CD4-positive, alpha-beta memory T cell (primary cell): ENCODE measurements at regions of chr9 and their contacts with region 1.

Region 1: GRCh38 chr9:35611230-35611797 is 6.3 kb downstream of the TESK1 start:
- DNase-seq: peak; percentile 45 to 63 (median 49)
- H3K4me3 ChIP-seq: no peak overlapping the region
- H3K4me3 Mint-ChIP-seq: peak overlapping the region in 1 of 8 donors; percentile 26
- H3K27ac ChIP-seq: no peak overlapping the region
- H3K27ac Mint-ChIP-seq: peak overlapping the region in 5 of 7 donors; percentile 4 to 83 (median 59)
- H3K4me1 ChIP-seq: peaks cover 19% of the 10 kb centered on the region
- H3K4me1 Mint-ChIP-seq: peaks cover 13 to 43% (median 20%) of the 10 kb centered on the region in 4 donors
- H3K27me3 ChIP-seq: no peaks in the 10 kb centered on the region
- H3K27me3 Mint-ChIP-seq: no peaks in the 10 kb centered on the region

Region 2: GRCh38 chr9:35636135-35636876 is 25.0 kb after region 1 on chr9:
- CTCF ChIA-PET with region 1: interaction called, 10 read pairs
- POLR2A ChIA-PET with region 1: interaction called, 3 read pairs
- intact Hi-C with region 1: no loop called
- DNase-seq: peak in 1 of 5 donors; percentile 33
- H3K4me3 ChIP-seq: no peak overlapping the region
- H3K4me3 Mint-ChIP-seq: peak overlapping the region in 3 of 8 donors; percentile 22 to 60 (median 43)
- H3K27ac ChIP-seq: no peak overlapping the region
- H3K27ac Mint-ChIP-seq: peak overlapping the region in 6 of 7 donors; percentile 6 to 71 (median 38)
- H3K4me1 ChIP-seq: peaks cover 32% of the 10 kb centered on the region
- H3K4me1 Mint-ChIP-seq: peaks cover 22 to 56% (median 41%) of the 10 kb centered on the region in 4 donors
- H3K27me3 ChIP-seq: no peaks in the 10 kb centered on the region
- H3K27me3 Mint-ChIP-seq: no peaks in the 10 kb centered on the region

Region 3: DNA sequence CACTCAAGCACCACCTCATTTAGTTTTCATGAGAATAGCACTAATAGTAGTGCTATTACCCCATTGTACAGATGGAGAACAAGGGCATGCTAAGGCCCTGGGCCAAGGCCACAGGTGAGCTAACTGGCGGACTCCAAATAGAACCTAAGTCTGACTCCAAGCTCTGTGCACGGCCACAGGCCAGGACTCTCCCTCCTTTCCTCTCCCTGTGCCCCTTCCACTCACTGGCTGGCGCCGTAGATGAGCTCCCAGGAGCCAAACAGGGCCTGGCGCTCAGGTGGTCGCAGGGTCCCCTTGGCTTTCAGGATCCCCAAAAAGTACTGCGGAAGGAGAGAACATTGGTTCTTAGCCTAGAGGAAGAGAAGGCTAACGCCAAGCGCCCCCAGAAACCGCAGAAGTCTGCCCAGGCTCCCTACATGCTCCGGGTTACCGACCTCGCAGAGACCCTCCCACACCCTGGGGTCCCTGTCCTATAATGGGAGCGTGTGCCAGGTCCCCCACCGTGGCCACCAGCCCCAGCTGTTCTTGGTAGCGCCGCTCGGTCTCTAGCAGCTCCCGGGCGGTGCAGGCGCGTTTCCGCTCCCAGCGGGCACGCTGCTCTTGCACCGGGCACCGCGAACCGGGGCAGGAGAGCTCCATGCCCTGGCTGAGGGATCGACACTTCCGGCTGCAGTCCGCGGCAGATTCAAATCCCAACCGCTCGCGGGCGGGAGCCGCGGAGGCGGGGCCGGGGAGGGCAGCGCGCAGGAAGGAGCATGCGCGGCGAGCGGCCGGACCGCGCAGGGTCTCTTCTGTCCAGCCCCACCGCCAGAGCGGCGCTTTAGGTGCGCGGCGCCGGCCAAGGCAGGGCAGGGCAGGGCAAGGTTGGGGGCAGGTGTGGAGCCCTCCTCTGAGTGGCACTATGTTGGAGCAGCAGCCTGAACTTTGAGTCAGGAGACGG is 53.5 kb after region 1 on chr9 and contains the start of gene ARHGEF39:
- CTCF ChIA-PET with region 1: interaction called, 145 read pairs
- POLR2A ChIA-PET with region 1: interaction called, 80 read pairs
- intact Hi-C with region 1: no loop called
- DNase-seq: peak; percentile 64 to 72 (median 67)
- H3K4me3 ChIP-seq: peak within 1 kb of the TSS; percentile 42 to 51
- H3K4me3 Mint-ChIP-seq: peak within 1 kb of the TSS; percentile 83 to 91 (median 88)
- H3K27ac ChIP-seq: peak within 1 kb of the TSS; percentile 96
- H3K27ac Mint-ChIP-seq: peak within 1 kb of the TSS; percentile 82 to 100 (median 97)
- H3K4me1 ChIP-seq: peaks cover 56% of the 10 kb centered on the region
- H3K4me1 Mint-ChIP-seq: peaks cover 44 to 68% (median 56%) of the 10 kb centered on the region in 4 donors
- H3K27me3 ChIP-seq: no peaks in the 10 kb centered on the region
- H3K27me3 Mint-ChIP-seq: no peaks in the 10 kb centered on the region
- total RNA-seq, gene ARHGEF39: not detected